ENCODE measurements at regions of chr3 and their contacts with region 1.

Region 1: DNA sequence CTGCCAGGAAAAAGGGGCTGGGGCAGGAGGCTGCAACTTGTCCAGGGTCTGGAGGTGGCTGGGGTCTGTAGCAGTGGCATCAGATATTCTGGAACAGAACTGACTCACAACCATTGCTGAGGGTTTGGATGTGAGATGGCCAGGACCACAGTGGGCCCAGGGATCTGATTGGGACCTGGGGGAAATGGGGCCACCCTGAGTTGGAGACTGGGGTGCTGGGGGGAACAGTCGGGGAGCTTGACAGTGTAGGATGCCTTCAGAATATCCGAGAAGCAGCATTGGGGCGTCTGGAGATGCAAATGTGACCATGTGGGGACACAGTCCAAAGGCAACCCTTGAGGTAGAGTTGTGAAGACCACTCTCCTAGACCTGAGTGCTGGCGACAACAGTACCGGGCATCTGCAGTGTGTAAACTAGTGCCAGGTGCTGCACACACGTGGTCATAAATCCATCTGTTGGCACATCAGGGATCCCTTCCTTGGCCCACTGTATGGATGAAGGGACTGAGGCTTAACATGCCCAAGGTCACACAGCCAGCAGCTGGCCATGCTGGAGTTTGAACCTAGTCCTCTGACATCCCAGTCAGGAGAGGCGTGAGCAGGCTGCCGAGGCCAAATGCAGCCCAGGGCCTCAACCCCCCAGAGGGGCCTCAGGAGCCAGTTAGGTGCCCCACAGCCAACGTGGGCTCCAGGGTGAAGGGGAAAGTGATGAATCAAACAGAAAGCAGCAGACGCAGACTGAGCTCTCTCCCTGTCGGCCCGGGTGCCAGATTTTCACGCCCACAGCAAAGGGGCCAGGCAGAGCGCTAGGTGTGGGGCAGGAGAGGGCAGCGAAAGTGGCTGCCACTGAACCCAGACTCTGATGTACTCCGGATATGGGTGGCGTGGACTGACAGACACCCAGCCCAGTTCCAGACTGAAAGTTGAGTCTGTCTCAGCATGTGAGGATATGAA is 18.8 kb downstream of the HEMK1 start:
- DNase-seq: peak; percentile 64
- H3K4me3 Mint-ChIP-seq: peak overlapping the region; percentile 58
- H3K27ac Mint-ChIP-seq: peak overlapping the region; percentile 98
- H3K4me1 Mint-ChIP-seq: peaks cover 78% of the 10 kb centered on the region
- H3K27me3 Mint-ChIP-seq: no peaks in the 10 kb centered on the region

Region 2: DNA sequence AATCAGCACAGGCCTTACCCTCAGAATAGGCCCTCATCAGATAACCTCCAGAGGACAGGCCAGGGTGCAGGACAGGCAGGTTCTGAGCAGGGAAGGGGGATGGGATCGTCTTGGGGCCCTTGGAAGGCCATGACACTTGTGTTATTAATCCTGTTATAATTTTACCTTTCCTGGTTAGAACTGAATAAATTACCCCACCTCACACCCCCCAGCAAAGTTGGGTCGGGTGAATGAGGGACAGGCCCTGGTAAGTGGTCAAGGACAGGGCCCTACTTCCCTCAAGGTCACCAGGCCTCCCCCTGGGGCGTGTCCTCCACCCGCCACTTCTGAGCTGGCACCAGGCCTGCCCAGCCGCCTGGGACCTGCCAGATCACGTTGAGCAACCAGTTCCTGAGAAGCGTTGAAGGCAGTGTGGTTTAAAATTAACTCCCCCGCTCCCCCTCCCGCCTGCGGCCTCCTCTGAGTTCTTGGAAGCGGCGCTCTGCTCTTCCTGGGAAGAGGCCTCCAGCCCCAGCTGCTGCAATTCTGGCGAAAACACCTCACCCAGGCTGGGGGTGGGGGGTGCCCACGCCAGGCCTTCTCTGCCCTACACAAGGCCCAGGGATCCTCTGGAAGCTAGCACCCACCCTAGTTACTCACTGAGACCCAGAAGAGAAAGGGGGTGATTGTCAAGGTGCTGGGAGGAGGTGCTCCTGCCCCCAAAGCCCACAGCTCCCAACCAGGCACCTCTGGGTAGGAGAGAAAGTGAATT is 12.9 kb after region 1 on chr3:
- intact Hi-C with region 1: loop called (anchors 1 kb)
- DNase-seq: peak; percentile 80
- H3K4me3 Mint-ChIP-seq: peak overlapping the region; percentile 74
- H3K27ac Mint-ChIP-seq: peak overlapping the region; percentile 100
- H3K4me1 Mint-ChIP-seq: peaks cover 81% of the 10 kb centered on the region
- H3K27me3 Mint-ChIP-seq: no peaks in the 10 kb centered on the region

Measured in activated T-helper 2 cell treated with anti-CD3 and anti-CD28 coated beads, Interferon-gamma antibody, Interleukin-2, Interleukin-4, amounts not matched to agents 10 μg/mL and 5 μg/mL and 100 μg/mL, durations not matched to agents 14 hours and 24 hours and 36 hours (primary cell).